ENCODE measurements at regions of chr16 and their contacts with region 1.

Region 1: DNA sequence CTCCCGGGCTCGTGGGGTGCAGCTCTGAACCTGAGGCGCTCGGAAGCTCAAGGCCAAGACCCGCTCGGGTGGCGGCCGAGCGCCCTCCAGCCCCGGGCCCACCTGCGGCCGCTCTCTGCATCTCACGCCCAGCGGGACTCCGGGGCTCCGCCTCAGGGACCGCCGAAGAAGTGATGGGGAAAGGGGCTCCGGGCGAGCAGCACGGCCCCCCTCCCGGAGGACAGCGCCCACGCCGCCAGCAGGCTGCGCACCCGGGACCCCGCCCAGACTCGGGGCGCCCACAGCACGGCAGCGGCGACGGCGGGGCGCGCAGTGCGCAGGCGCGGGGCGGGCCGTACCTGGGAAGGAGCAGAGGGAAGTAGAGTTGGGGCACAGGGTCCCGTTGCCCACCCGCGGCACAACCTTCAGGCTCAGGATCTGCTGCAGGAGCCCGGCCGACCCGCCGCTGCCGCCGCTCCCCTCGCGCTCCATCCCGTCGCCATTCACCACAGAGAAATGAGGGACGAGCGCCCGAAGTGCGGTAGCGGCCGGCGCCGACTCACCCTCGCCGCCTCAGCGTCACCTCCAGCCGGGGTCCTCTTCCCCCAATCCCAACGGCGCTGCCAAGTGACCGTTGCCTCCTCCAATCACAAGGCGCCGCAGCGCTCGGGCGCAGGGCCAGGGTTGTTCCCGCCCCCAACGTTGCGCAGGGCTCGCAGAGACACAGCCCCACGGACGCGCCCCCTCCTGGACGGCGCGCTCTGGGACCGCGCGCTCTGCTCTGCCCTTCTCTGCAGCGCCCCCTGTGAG is at the start of gene TMEM170A:
- DNase-seq: peak; percentile 94 to 99
- ATAC-seq: peak; percentile 95 to 98
- H3K4me3 ChIP-seq: peak within 1 kb of the TSS; percentile 97
- H3K27ac ChIP-seq: peak within 1 kb of the TSS; percentile 94 to 95
- H3K4me1 ChIP-seq: peaks cover 20% of the 10 kb centered on the region; the same call in 2 of the 3 replicates
- CTCF ChIP-seq: peak; percentile 100
- EP300 ChIP-seq: no peak
- POLR2A ChIP-seq: peak; percentile 98
- RAD21 ChIP-seq: peak; percentile 53 to 74
- polyA plus RNA-seq, gene TMEM170A: 21.2 and 21.7 TPM in 2 replicates

Region 2: DNA sequence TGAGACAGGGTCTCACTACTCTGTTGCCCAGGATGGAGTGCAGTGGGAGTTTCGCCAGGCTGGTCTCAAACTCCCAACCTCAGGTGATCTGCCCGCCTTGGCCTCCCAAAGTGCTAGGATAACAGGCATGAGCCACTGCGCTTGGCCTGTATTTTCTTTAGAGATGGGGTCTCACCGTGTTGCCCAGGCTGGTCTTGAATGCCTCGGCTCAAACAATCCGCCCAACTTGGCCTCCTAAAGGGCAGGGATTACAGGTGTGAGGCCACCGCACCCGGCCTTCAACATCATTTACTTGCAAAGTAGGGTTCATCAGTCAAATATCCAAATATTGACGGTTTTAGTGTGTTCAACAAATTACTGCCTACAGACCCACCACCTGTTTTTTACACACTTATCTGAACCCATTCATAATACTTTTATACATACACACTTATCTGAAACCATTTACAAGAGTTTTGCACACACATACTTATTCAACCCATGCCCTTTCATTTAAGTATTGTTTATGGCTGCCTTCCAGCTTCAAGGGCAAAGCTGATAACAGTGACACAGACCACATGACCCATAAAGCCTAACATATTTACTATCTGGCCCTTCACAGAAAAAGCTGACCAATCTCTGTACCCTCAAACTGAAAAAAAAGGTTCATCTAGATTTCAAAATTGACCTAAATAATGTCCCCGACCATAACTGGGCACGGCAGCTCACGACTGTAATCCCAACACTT is 11.7 kb before region 1 on chr16:
- CTCF ChIA-PET with region 1: interaction called, 37 read pairs
- POLR2A ChIA-PET with region 1: no interaction called
- DNase-seq: no peak
- ATAC-seq: no peak
- H3K4me3 ChIP-seq: no peak overlapping the region
- H3K27ac ChIP-seq: no peak overlapping the region
- H3K4me1 ChIP-seq: no peaks in the 10 kb centered on the region
- CTCF ChIP-seq: no peak
- EP300 ChIP-seq: no peak
- POLR2A ChIP-seq: no peak
- RAD21 ChIP-seq: no peak

Region 3: GRCh38 chr16:75478074-75478473 is 13.8 kb after region 1 on chr16:
- CTCF ChIA-PET with region 1: interaction called, 53 read pairs
- POLR2A ChIA-PET with region 1: no interaction called
- DNase-seq: no peak
- ATAC-seq: peak; percentile 13 to 30; a peak in 2 of 6 replicates
- H3K4me3 ChIP-seq: no peak overlapping the region
- H3K27ac ChIP-seq: no peak overlapping the region
- H3K4me1 ChIP-seq: peaks cover 2% of the 10 kb centered on the region; the same call in 1 of the 3 replicates
- CTCF ChIP-seq: no peak
- EP300 ChIP-seq: no peak
- POLR2A ChIP-seq: no peak
- RAD21 ChIP-seq: no peak

Region 4: DNA sequence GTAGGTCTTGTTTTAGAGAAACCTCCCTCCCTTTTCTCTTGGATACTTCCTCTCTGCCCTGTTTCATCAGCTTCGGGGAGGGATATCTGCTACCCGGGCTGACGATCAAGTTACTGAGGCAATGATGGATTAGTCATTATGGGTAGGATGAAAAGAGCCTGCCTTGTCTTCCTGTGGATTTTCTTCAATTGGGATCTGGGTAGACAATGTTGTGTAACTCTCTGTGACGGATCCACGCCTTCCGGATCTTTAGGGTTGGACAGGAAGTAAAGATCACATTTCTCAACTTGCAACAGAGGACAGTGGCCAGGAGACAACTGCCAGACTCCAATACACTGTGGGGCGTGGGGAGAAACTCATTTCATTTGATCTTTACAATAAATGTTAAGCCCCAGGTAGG is 42.2 kb after region 1 on chr16:
- CTCF ChIA-PET with region 1: interaction called, 10 read pairs
- POLR2A ChIA-PET with region 1: no interaction called
- DNase-seq: peak; percentile 38 to 73
- ATAC-seq: peak; percentile 40 to 68
- H3K4me3 ChIP-seq: no peak overlapping the region
- H3K27ac ChIP-seq: peak overlapping the region; percentile 54 to 73
- H3K4me1 ChIP-seq: peaks cover 32% of the 10 kb centered on the region
- CTCF ChIP-seq: no peak
- EP300 ChIP-seq: no peak
- POLR2A ChIP-seq: no peak
- RAD21 ChIP-seq: no peak

Region 5: GRCh38 chr16:75566040-75566810 is 101.9 kb after region 1 on chr16 and contains the start of gene GABARAPL2:
- CTCF ChIA-PET with region 1: interaction called, 10 read pairs
- POLR2A ChIA-PET with region 1: no interaction called
- DNase-seq: peak; percentile 74 to 76
- ATAC-seq: peak; percentile 87 to 91
- H3K4me3 ChIP-seq: peak within 1 kb of the TSS; percentile 76
- H3K27ac ChIP-seq: peak within 1 kb of the TSS; percentile 79 to 92
- H3K4me1 ChIP-seq: peaks cover 15% of the 10 kb centered on the region
- CTCF ChIP-seq: no peak
- EP300 ChIP-seq: no peak
- POLR2A ChIP-seq: peak; percentile 61
- RAD21 ChIP-seq: no peak
- polyA plus RNA-seq, gene GABARAPL2: 80.6 and 84.8 TPM in 2 replicates

Measured in A549 (cell line).